ENCODE measurements at regions of chr13 and their contacts with region 1.

Region 1: GRCh38 chr13:42969558-42970172 is 22.4 kb downstream of the EPSTI1 start:
- DNase-seq: peak; percentile 71 to 93 (median 82)
- ATAC-seq: peak; percentile 90
- H3K4me3 ChIP-seq: no peak overlapping the region
- H3K4me3 Mint-ChIP-seq: no peak overlapping the region
- H3K27ac ChIP-seq: no peak overlapping the region
- H3K27ac Mint-ChIP-seq: peak overlapping the region; percentile 24
- H3K4me1 ChIP-seq: peaks cover 6% of the 10 kb centered on the region
- H3K4me1 Mint-ChIP-seq: peaks cover 31% of the 10 kb centered on the region
- H3K27me3 ChIP-seq: no peaks in the 10 kb centered on the region
- H3K27me3 Mint-ChIP-seq: no peaks in the 10 kb centered on the region
- CTCF ChIP-seq: peak; percentile 86

Region 2: GRCh38 chr13:42991892-42992763 is 22.5 kb after region 1 on chr13 and contains the start of gene EPSTI1:
- CTCF ChIA-PET with region 1: interaction called, 17 read pairs
- POLR2A ChIA-PET with region 1: interaction called, 9 read pairs
- intact Hi-C with region 1: loop called (anchors 1 to 2 kb)
- DNase-seq: peak; percentile 57 to 86 (median 72)
- ATAC-seq: peak; percentile 80
- H3K4me3 ChIP-seq: peak within 1 kb of the TSS; percentile 94
- H3K4me3 Mint-ChIP-seq: peak within 1 kb of the TSS; percentile 94
- H3K27ac ChIP-seq: peak within 1 kb of the TSS; percentile 92 to 94
- H3K27ac Mint-ChIP-seq: peak within 1 kb of the TSS; percentile 100
- H3K4me1 ChIP-seq: peaks cover 27% of the 10 kb centered on the region
- H3K4me1 Mint-ChIP-seq: peaks cover 54% of the 10 kb centered on the region
- H3K27me3 ChIP-seq: no peaks in the 10 kb centered on the region
- H3K27me3 Mint-ChIP-seq: no peaks in the 10 kb centered on the region
- CTCF ChIP-seq: no peak
- total RNA-seq, gene EPSTI1: 23.5 to 24.5 TPM

Region 3: GRCh38 chr13:43023289-43023951 is 53.8 kb after region 1 on chr13 and contains the start of gene DNAJC15:
- CTCF ChIA-PET with region 1: interaction called, 8 read pairs
- POLR2A ChIA-PET with region 1: no interaction called
- intact Hi-C with region 1: loop called in 1 of 2 experiments (anchors 1 kb)
- DNase-seq: peak; percentile 41 to 90 (median 76)
- ATAC-seq: peak; percentile 89
- H3K4me3 ChIP-seq: peak within 1 kb of the TSS; percentile 89
- H3K4me3 Mint-ChIP-seq: peak within 1 kb of the TSS; percentile 92
- H3K27ac ChIP-seq: peak within 1 kb of the TSS; percentile 52 to 69
- H3K27ac Mint-ChIP-seq: peak within 1 kb of the TSS; percentile 96
- H3K4me1 ChIP-seq: peaks cover 24% of the 10 kb centered on the region
- H3K4me1 Mint-ChIP-seq: peaks cover 39% of the 10 kb centered on the region
- H3K27me3 ChIP-seq: no peaks in the 10 kb centered on the region
- H3K27me3 Mint-ChIP-seq: no peaks in the 10 kb centered on the region
- CTCF ChIP-seq: no peak
- total RNA-seq, gene DNAJC15: 6.8 to 7.6 TPM

Region 4: DNA sequence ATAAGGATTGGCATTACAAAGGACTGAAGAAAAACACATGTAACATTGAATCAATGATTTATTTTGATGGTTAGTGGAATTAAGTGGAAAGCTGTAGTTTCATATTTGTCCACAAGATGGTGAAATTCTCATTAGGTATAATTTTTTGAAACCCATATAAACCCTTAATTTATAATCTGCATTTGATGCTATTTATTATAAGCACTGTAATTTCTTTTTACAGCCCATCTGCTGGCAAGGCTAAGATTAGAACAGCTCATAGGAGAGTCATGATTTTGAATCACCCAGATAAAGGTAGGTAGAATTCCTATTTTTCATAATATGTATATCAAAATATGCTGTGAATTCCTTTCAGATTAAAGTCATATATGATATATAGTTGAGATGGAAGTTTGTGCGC is 115.9 kb after region 1 on chr13:
- CTCF ChIA-PET with region 1: interaction called, 3 read pairs
- POLR2A ChIA-PET with region 1: no interaction called
- intact Hi-C with region 1: loop called in 1 of 2 experiments (anchors 1 kb)
- DNase-seq: peak in 3 of 14 experiments; percentile 35 to 41 (median 41)
- ATAC-seq: no peak
- H3K4me3 ChIP-seq: no peak overlapping the region
- H3K4me3 Mint-ChIP-seq: no peak overlapping the region
- H3K27ac ChIP-seq: no peak overlapping the region
- H3K27ac Mint-ChIP-seq: no peak overlapping the region
- H3K4me1 ChIP-seq: no peaks in the 10 kb centered on the region
- H3K4me1 Mint-ChIP-seq: peaks cover 19% of the 10 kb centered on the region
- H3K27me3 ChIP-seq: no peaks in the 10 kb centered on the region
- H3K27me3 Mint-ChIP-seq: no peaks in the 10 kb centered on the region
- CTCF ChIP-seq: peak; percentile 71

Region 5: GRCh38 chr13:43132257-43132656 is 162.6 kb after region 1 on chr13:
- CTCF ChIA-PET with region 1: interaction called, 5 read pairs
- POLR2A ChIA-PET with region 1: no interaction called
- intact Hi-C with region 1: loop called in 1 of 2 experiments (anchors 2 kb)
- DNase-seq: peak in 2 of 14 experiments; percentile 19 to 24
- ATAC-seq: no peak
- H3K4me3 ChIP-seq: no peak overlapping the region
- H3K4me3 Mint-ChIP-seq: no peak overlapping the region
- H3K27ac ChIP-seq: no peak overlapping the region
- H3K27ac Mint-ChIP-seq: no peak overlapping the region
- H3K4me1 ChIP-seq: peaks cover 5% of the 10 kb centered on the region
- H3K4me1 Mint-ChIP-seq: peaks cover 13% of the 10 kb centered on the region
- H3K27me3 ChIP-seq: no peaks in the 10 kb centered on the region
- H3K27me3 Mint-ChIP-seq: peaks cover 23% of the 10 kb centered on the region
- CTCF ChIP-seq: peak; percentile 18

Region 6: DNA sequence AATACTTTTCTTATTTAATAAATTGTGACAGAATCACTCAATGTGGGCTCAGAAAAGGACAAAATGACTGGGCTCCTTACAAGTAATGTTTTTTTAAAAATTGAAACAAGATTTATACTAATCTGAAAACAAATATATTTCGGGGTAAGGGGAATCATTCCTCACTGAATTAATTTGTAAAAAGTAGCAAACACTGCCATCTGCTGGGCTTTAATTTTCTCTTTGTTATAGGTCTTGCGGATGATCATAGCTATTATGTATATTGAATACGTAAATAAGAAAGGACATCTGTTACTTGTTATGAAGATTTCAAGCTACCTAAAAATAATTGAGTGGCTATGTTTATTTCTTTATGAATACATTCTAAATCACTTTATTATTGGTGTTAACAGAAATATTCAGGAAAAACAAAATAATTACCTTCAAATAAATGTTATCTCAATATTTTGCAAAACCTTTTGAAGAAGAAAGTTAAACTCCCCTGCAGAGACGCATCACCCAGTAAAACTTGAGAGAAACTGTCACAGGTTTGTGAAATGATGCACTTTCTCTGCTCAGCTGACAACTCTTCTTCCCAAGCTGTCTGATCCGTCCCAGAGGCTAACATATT is 834.9 kb after region 1 on chr13:
- CTCF ChIA-PET with region 1: no interaction called
- POLR2A ChIA-PET with region 1: no interaction called
- intact Hi-C with region 1: loop called (anchors 1 to 2 kb)
- DNase-seq: peak in 4 of 14 experiments; percentile 10 to 64 (median 60)
- ATAC-seq: no peak
- H3K4me3 ChIP-seq: no peak overlapping the region
- H3K4me3 Mint-ChIP-seq: no peak overlapping the region
- H3K27ac ChIP-seq: no peak overlapping the region
- H3K27ac Mint-ChIP-seq: no peak overlapping the region
- H3K4me1 ChIP-seq: no peaks in the 10 kb centered on the region
- H3K4me1 Mint-ChIP-seq: no peaks in the 10 kb centered on the region
- H3K27me3 ChIP-seq: peaks cover 0 to 4% of the 10 kb centered on the region in 2 experiments
- H3K27me3 Mint-ChIP-seq: peaks cover 22% of the 10 kb centered on the region
- CTCF ChIP-seq: peak; percentile 69

Region 7: DNA sequence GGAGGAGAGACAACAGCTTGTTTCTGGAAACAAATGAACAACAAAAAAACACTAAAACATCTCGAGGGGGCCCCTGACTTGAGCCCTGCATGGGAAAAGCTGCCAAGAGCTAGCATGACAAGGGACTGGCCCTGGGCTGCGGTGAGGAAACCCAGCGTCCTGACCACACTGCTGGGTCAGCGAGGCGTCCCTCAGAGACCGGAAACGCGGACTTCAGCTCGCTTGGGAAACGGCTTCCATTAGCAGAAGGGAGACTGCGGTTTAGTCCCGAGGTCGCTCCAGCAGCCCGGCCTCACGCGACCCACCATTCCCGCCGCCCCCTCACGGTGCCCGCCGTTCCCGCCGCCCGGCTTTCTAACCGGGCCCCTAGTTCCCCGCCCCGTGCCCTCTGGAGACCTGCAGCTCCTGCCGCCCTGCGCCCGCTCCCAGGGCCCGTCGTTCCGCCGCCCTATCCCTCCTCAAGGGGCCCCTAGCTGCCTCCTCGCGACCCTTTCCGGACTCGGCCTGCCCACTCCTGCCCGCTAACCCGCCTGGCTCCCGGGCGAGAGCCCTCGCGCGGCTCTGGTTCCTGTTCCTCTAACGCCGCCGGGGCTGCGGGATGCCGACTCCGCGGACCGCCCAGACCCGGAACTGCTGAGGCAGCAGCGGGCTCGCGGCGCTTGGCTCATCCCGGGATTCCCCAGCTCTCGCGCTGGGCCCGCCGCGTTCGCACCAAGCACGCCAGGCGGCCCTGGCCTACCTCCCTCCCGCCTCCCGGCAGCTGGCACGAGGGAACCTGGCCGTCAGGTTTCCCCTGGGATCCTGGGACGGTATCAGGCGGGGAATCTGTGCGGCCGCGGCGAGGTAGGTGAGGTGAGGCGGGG is 909.5 kb after region 1 on chr13 and contains the start of gene CCDC122:
- CTCF ChIA-PET with region 1: no interaction called
- POLR2A ChIA-PET with region 1: no interaction called
- intact Hi-C with region 1: loop called (anchors 2 to 10 kb)
- DNase-seq: peak; percentile 31 to 91 (median 59)
- ATAC-seq: peak; percentile 90
- H3K4me3 ChIP-seq: peak within 1 kb of the TSS; percentile 76
- H3K4me3 Mint-ChIP-seq: peak within 1 kb of the TSS; percentile 91
- H3K27ac ChIP-seq: peak within 1 kb of the TSS; percentile 46 to 58
- H3K27ac Mint-ChIP-seq: peak within 1 kb of the TSS; percentile 79
- H3K4me1 ChIP-seq: peaks cover 16% of the 10 kb centered on the region
- H3K4me1 Mint-ChIP-seq: peaks cover 16% of the 10 kb centered on the region
- H3K27me3 ChIP-seq: no peaks in the 10 kb centered on the region
- H3K27me3 Mint-ChIP-seq: peaks cover 11% of the 10 kb centered on the region
- CTCF ChIP-seq: no peak
- total RNA-seq, gene CCDC122: 0.52 to 0.64 TPM

Region 8: DNA sequence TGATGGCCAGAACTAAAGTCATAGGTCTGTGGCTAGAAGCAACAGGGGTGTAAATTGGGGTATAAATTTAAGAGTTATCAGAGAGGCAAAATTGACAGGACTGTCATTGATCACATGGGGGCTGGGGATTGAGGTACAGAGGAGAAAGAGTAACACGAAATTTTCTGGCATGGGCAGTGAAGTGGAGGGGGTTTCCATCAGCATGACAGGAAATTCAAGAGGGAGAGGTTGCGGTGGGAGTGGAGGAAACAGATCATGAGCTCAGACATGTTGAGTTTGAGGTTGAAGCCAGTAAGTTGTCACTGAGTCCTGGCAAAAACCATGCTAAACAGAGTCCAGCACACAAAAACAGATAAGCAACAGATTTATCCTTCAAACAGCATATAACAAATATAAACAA is 1798.6 kb after region 1 on chr13:
- CTCF ChIA-PET with region 1: no interaction called
- POLR2A ChIA-PET with region 1: no interaction called
- intact Hi-C with region 1: no loop called
- DNase-seq: peak in 5 of 14 experiments; percentile 4 to 72 (median 47)
- ATAC-seq: peak; percentile 81
- H3K4me3 ChIP-seq: no peak overlapping the region
- H3K4me3 Mint-ChIP-seq: no peak overlapping the region
- H3K27ac ChIP-seq: no peak overlapping the region
- H3K27ac Mint-ChIP-seq: peak overlapping the region; percentile 1
- H3K4me1 ChIP-seq: peaks cover 14% of the 10 kb centered on the region
- H3K4me1 Mint-ChIP-seq: peaks cover 25% of the 10 kb centered on the region
- H3K27me3 ChIP-seq: no peaks in the 10 kb centered on the region
- H3K27me3 Mint-ChIP-seq: no peaks in the 10 kb centered on the region
- CTCF ChIP-seq: no peak